Kidney (tissue), 22 donors: ENCODE measurements at regions of chr3 and their contacts with region 1.

Region 1: DNA sequence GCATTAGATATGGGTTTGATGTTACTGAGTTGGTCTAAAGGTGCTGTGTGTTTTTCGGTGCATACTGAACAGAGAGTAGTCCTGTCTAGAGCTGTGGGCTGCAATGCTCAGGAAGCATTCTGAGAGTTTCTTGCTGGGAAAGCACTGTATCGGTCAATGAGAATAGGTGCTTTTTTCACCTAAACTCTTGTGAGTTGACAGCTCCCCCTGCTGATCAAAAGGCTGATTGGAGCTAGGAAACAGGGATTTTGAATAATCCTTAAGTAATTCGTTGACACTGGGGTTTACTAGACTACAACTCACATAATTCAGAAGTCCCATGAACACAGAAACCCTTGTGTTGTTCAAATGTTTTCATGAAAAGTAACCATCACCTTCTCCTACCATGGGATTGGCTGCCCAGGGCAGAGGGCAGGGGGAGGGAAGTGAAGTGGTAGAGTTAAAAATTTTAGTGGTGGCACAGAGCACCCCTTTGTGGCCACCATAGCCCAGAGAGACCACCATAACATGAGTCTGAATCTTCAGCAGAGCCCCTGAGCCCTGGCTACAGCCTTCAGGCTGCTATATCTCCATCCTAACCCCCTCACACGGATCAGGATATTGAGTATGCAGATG is 13.0 kb upstream of the MANF start:
- DNase-seq: peak; percentile 15 to 87 (median 76)
- H3K4me3 ChIP-seq: no peak overlapping the region
- H3K27ac ChIP-seq: no peak overlapping the region
- H3K4me1 ChIP-seq: no peaks in the 10 kb centered on the region
- H3K27me3 ChIP-seq: no peaks in the 10 kb centered on the region
- CTCF ChIP-seq: peak; percentile 80

Region 2: GRCh38 chr3:50627407-50628051 is 744.5 kb before region 1 on chr3:
- intact Hi-C with region 1: loop called (anchors 10 kb)
- DNase-seq: peak in 1 of 5 donors; percentile 90
- H3K4me3 ChIP-seq: no peak overlapping the region
- H3K27ac ChIP-seq: no peak overlapping the region
- H3K4me1 ChIP-seq: peaks cover 0 to 21% (median 17%) of the 10 kb centered on the region in 3 donors
- H3K27me3 ChIP-seq: no peaks in the 10 kb centered on the region
- CTCF ChIP-seq: no peak

Region 3: DNA sequence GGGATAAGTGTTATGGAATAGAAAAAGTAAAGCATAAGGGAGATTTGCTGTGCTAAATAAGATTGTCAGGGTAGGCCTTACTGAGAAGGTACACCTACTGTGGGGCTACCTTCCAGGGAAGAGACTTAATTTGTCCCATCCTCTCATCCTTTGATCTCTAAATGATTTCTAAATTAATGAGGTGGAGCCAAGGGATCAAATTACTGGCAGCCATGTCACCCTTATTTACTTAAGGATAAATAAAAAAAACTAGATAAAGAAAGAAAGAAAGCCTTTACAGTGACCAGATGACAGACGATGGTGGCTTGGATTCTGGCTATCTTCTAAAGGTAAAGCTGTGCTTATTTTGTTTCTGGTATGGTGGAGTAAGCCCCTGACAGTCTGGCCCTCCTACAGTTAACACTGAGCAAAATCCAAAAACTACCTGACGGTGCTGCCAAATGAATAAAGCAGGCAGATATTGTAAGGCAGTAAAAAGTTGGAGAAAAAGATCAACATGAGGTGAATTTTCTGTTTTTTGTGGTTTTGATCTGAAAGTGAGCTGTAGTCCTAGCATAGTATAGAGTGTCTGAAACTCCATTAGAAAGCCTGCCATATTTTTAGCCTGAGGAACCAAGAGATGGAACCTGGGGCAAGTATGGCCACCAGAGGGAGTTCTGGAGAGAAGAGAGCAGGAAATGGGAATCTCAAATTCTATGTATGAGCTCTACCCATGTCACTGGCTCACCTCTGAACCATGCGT is 272.1 kb before region 1 on chr3:
- intact Hi-C with region 1: loop called (anchors 10 kb)
- DNase-seq: peak in 3 of 5 donors; percentile 60 to 76 (median 67)
- H3K4me3 ChIP-seq: no peak overlapping the region
- H3K27ac ChIP-seq: no peak overlapping the region
- H3K4me1 ChIP-seq: no peaks in the 10 kb centered on the region
- H3K27me3 ChIP-seq: no peaks in the 10 kb centered on the region
- CTCF ChIP-seq: peak; percentile 57

Region 4: DNA sequence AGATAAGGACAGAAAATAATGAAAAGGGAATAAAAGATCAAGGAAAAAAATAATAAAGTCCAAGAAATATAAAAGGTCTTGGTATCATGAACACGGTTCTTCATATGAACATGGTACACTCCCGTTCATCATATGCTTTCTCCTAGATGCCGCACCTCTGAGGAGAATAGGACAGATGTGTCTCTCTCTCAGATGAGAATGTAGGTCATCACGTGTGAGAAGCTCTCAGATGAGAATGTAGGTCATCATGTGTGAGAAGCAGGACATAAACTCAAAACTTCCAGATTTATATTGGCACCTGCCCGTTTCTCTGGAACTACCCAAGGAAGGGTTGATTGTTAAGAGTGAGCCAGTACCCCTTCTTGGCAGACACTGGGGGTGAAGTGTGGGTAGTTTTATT is 436.9 kb after region 1 on chr3:
- intact Hi-C with region 1: no loop called
- DNase-seq: no peak
- H3K4me3 ChIP-seq: no peak overlapping the region
- H3K27ac ChIP-seq: no peak overlapping the region
- H3K4me1 ChIP-seq: no peaks in the 10 kb centered on the region
- H3K27me3 ChIP-seq: no peaks in the 10 kb centered on the region
- CTCF ChIP-seq: no peak